Colonic mucosa (tissue), 4 donors: ENCODE measurements at regions of chr4 and their contacts with region 1.

Region 1: DNA sequence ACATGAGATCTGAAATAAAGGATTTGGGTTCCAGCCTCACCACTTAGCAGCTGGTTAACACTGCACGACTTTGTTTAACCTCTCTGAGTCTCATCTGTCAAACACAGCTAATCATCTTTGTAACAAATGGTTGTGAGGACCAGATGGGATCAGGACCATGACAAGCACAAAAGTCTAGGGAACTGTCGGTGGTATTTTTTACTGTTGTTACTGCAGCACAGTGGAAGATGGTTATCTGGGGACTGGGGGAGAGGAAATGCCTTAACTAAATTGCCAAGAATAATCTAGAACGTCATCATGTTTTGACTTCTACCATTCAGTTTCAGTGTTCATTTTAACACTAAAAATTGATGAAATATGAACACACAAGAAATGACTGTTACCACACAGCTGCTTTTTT is 99.5 kb downstream of the ADGRA3 start:
- DNase-seq: no peak
- H3K4me3 ChIP-seq: no peak overlapping the region
- H3K27ac ChIP-seq: no peak overlapping the region
- H3K4me1 ChIP-seq: no peaks in the 10 kb centered on the region
- H3K27me3 ChIP-seq: no peaks in the 10 kb centered on the region
- CTCF ChIP-seq: no peak

Region 2: GRCh38 chr4:22115262-22115661 is 301.1 kb before region 1 on chr4:
- intact Hi-C with region 1: no loop called
- DNase-seq: no peak
- H3K4me3 ChIP-seq: no peak overlapping the region
- H3K27ac ChIP-seq: no peak overlapping the region
- H3K4me1 ChIP-seq: no peaks in the 10 kb centered on the region
- H3K27me3 ChIP-seq: no peaks in the 10 kb centered on the region
- CTCF ChIP-seq: no peak

Region 3: GRCh38 chr4:22688236-22688635 is 271.8 kb after region 1 on chr4:
- intact Hi-C with region 1: loop called (anchors 5 kb)
- DNase-seq: no peak
- H3K4me3 ChIP-seq: no peak overlapping the region
- H3K27ac ChIP-seq: no peak overlapping the region
- H3K4me1 ChIP-seq: peaks cover 3% of the 10 kb centered on the region
- H3K27me3 ChIP-seq: no peaks in the 10 kb centered on the region
- CTCF ChIP-seq: no peak

Region 4: DNA sequence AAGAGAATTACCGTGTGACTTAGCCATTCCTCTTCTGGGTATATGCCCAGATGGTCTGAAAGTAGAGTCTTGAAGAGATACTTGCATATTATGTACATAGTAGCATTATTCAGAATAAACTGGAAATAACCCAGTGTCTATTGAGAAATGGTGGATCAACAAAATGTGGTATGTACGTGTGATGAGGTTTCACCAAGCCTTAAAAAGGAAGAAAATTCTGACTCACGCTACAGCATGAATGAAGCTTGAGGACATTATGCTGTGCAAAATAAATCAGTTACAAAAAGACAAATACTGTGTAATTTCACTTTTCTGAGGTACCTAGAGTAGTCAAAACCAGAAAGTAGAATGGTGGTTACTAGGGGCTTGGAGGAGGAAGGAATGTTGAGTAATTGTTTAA is 313.6 kb after region 1 on chr4:
- intact Hi-C with region 1: no loop called
- DNase-seq: no peak
- H3K4me3 ChIP-seq: no peak overlapping the region
- H3K27ac ChIP-seq: no peak overlapping the region
- H3K4me1 ChIP-seq: no peaks in the 10 kb centered on the region
- H3K27me3 ChIP-seq: no peaks in the 10 kb centered on the region
- CTCF ChIP-seq: no peak

Region 5: DNA sequence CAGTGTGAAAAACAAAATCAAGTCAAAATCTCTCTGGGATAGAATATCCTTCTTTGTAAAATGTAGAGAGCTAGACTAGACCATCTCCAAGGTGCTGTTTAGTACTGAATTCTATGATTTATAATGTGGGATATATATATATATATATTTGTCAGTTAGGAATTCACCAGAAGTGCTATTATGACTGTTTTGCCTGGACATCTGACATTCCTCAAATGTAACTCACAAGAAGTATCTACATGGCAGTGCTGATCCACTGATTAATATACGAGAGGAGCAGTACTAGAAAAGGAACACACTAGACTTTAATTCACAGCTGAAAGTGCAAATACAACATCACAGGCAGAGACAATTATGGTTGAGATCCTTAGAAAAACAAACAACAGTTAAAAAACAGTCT is 485.2 kb after region 1 on chr4:
- intact Hi-C with region 1: no loop called
- DNase-seq: no peak
- H3K4me3 ChIP-seq: no peak overlapping the region
- H3K27ac ChIP-seq: no peak overlapping the region
- H3K4me1 ChIP-seq: no peaks in the 10 kb centered on the region
- H3K27me3 ChIP-seq: no peaks in the 10 kb centered on the region
- CTCF ChIP-seq: no peak